A673 (cell line): ENCODE measurements at regions of chr1 and their contacts with region 1.

Region 1: DNA sequence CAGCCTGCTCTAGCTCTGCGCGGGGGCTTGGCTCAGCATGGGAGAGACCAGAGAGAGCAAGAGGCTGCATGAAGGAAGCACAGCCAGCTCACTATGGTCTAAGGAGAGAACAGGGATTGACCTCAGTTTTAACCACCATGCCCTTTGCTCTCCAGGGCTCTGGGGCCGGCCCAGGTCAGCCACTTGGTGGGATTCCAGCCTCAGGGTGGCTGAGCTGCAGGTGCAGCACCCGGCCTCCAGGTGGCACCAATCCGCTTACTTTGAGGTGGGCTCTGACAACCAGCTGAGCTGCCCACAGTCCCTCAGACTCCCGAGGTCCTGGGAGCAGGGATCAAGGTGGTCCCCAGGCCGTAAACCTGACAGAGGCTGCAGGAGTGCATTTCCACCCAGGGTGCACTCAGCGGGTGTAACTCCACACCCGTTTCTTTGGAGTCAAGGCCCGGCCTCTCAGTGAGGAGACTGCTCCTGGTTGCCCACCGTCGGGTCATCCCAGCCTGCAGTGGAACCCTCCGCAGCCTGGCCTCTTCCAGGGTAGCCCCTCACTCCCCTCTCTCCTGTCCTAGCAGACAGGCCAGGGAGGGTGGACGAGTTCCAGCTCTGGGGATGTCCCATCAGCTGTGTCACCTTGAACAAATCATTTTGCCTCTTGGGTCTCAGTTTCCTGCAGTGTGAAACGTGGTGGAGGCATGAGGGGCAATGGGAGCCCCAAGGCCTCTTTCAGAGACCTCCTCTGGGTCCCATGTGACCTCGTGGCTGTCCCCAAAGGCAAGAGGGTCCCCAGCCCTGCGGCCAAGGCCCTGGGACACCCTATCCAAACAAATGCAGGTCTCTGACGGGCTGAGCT is 607 bp upstream of the LGR6 start:
- DNase-seq: peak; percentile 59
- H3K4me3 ChIP-seq: no peak overlapping the region
- H3K27ac ChIP-seq: no peak overlapping the region
- H3K4me1 ChIP-seq: no peaks in the 10 kb centered on the region
- H3K27me3 ChIP-seq: peaks cover 39% of the 10 kb centered on the region
- CTCF ChIP-seq: peak; percentile 90

Region 2: GRCh38 chr1:203091761-203092330 is 898.9 kb after region 1 on chr1:
- CTCF ChIA-PET with region 1: interaction called, 10 read pairs
- POLR2A ChIA-PET with region 1: no interaction called
- intact Hi-C with region 1: no loop called
- DNase-seq: no peak
- H3K4me3 ChIP-seq: no peak overlapping the region
- H3K27ac ChIP-seq: no peak overlapping the region
- H3K4me1 ChIP-seq: no peaks in the 10 kb centered on the region
- H3K27me3 ChIP-seq: no peaks in the 10 kb centered on the region
- CTCF ChIP-seq: no peak